ENCODE measurements at regions of chr15 and their contacts with region 1.

Region 1: GRCh38 chr15:41022487-41023090 is 69.3 kb downstream of the CHAC1 start:
- DNase-seq: peak; percentile 45 to 47
- H3K4me3 ChIP-seq: no peak overlapping the region
- H3K4me3 Mint-ChIP-seq: no peak overlapping the region
- H3K27ac Mint-ChIP-seq: no peak overlapping the region
- H3K4me1 ChIP-seq: 0 out of 2 replicates have a peak, but pooled peaks cover 5% of the 10 kb centered on the region
- H3K4me1 Mint-ChIP-seq: no peaks in the 10 kb centered on the region
- H3K27me3 ChIP-seq: no peaks in the 10 kb centered on the region
- H3K27me3 Mint-ChIP-seq: no peaks in the 10 kb centered on the region
- CTCF ChIP-seq: peak; percentile 68 to 78

Region 2: DNA sequence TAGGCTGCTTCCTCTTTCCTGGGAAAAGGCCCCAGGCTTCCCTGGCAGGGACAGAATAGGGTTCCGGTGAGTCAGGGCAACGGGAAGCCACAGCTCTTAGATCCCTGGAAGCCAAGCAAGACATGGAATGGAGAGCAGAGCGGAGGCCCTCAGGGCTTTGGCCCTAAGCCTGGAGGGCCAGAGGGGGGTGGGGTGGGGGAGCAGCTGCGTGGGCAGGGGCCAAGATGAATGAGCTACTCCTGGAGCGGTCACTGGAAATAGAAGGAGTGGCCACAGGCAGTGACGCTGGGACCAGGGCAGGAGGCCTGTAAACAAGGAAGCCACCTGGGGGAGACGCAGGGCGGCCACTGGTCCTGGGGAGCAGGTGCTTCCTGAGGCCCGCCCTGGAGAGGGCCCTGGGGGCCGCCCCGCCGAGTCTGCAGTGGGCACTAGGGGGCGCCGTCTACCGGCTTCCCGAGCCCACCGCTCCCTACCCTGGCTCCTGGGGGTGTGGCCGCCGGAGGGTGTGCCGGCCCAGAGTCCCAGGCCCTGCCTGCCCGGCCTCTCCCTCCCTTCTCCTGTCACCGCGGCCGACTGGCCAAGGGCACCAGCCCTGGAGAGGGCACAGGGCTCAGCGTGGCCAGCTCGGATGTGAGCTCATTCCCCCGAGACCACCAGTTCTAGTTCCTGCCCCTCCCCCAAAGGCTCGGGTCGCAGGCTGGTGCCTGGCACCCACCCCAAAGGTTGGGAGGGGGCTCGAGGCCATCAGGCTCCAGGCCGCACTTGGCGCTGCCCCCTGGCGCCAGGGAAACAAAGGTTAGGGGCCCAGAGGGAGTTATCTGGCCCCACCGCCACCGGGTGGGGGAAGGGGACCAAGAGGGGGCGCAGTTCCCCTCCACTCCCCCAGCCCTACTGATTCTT is 116.2 kb before region 1 on chr15:
- CTCF ChIA-PET with region 1: interaction called, 18 read pairs
- POLR2A ChIA-PET with region 1: no interaction called
- intact Hi-C with region 1: loop called (anchors 1 kb)
- DNase-seq: peak; percentile 88 to 92
- H3K4me3 ChIP-seq: peak overlapping the region; percentile 16; the same call in 1 of the 2 replicates
- H3K4me3 Mint-ChIP-seq: no peak overlapping the region
- H3K27ac Mint-ChIP-seq: peak overlapping the region; percentile 35
- H3K4me1 ChIP-seq: peaks cover 28% of the 10 kb centered on the region
- H3K4me1 Mint-ChIP-seq: peaks cover 12% of the 10 kb centered on the region
- H3K27me3 ChIP-seq: no peaks in the 10 kb centered on the region
- H3K27me3 Mint-ChIP-seq: no peaks in the 10 kb centered on the region
- CTCF ChIP-seq: peak; percentile 86 to 89

Region 3: GRCh38 chr15:40941528-40942336 is 80.9 kb before region 1 on chr15:
- CTCF ChIA-PET with region 1: interaction called, 10 read pairs
- POLR2A ChIA-PET with region 1: no interaction called
- intact Hi-C with region 1: loop called (anchors 1 kb)
- DNase-seq: peak; percentile 86 to 90
- H3K4me3 ChIP-seq: peak overlapping the region; percentile 56
- H3K4me3 Mint-ChIP-seq: peak overlapping the region; percentile 79
- H3K27ac Mint-ChIP-seq: peak overlapping the region; percentile 95
- H3K4me1 ChIP-seq: peaks cover 12% of the 10 kb centered on the region
- H3K4me1 Mint-ChIP-seq: no peaks in the 10 kb centered on the region
- H3K27me3 ChIP-seq: no peaks in the 10 kb centered on the region
- H3K27me3 Mint-ChIP-seq: no peaks in the 10 kb centered on the region
- CTCF ChIP-seq: peak; percentile 16 to 60

Region 4: GRCh38 chr15:40968290-40969085 is 54.1 kb before region 1 on chr15:
- CTCF ChIA-PET with region 1: no interaction called
- POLR2A ChIA-PET with region 1: interaction called, 10 read pairs
- intact Hi-C with region 1: no loop called
- DNase-seq: no peak
- H3K4me3 ChIP-seq: no peak overlapping the region
- H3K4me3 Mint-ChIP-seq: no peak overlapping the region
- H3K27ac Mint-ChIP-seq: no peak overlapping the region
- H3K4me1 ChIP-seq: 0 out of 2 replicates have a peak, but pooled peaks cover 3% of the 10 kb centered on the region
- H3K4me1 Mint-ChIP-seq: peaks cover 9% of the 10 kb centered on the region
- H3K27me3 ChIP-seq: no peaks in the 10 kb centered on the region
- H3K27me3 Mint-ChIP-seq: no peaks in the 10 kb centered on the region
- CTCF ChIP-seq: no peak

Region 5: GRCh38 chr15:41056810-41057209 is 34.2 kb after region 1 on chr15:
- CTCF ChIA-PET with region 1: no interaction called
- POLR2A ChIA-PET with region 1: no interaction called
- intact Hi-C with region 1: loop called (anchors 2 kb)
- DNase-seq: no peak
- H3K4me3 ChIP-seq: no peak overlapping the region
- H3K4me3 Mint-ChIP-seq: no peak overlapping the region
- H3K27ac Mint-ChIP-seq: no peak overlapping the region
- H3K4me1 ChIP-seq: no peaks in the 10 kb centered on the region
- H3K4me1 Mint-ChIP-seq: no peaks in the 10 kb centered on the region
- H3K27me3 ChIP-seq: no peaks in the 10 kb centered on the region
- H3K27me3 Mint-ChIP-seq: no peaks in the 10 kb centered on the region
- CTCF ChIP-seq: no peak

Region 6: DNA sequence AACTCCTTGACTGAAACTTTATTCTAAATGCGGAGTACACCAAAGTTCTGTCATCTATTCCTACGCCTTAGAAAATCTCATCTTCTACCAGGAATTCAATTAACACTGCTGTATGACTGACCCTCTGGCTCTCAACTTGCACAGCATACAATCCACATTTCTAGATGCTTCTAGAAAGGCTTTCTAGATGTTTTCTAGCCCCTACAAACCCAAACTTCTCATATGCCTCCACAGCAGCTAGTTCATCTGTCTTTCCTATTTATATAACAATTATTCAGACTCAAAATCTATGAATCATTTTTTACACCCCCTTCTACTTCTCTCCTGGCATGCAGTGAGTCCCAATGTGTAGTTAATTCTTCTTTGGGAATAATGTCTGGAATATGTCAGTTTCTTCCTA is 80.3 kb after region 1 on chr15:
- CTCF ChIA-PET with region 1: no interaction called
- POLR2A ChIA-PET with region 1: no interaction called
- intact Hi-C with region 1: loop called (anchors 1 kb)
- DNase-seq: no peak
- H3K4me3 ChIP-seq: no peak overlapping the region
- H3K4me3 Mint-ChIP-seq: no peak overlapping the region
- H3K27ac Mint-ChIP-seq: no peak overlapping the region
- H3K4me1 ChIP-seq: no peaks in the 10 kb centered on the region
- H3K4me1 Mint-ChIP-seq: peaks cover 6% of the 10 kb centered on the region
- H3K27me3 ChIP-seq: no peaks in the 10 kb centered on the region
- H3K27me3 Mint-ChIP-seq: no peaks in the 10 kb centered on the region
- CTCF ChIP-seq: no peak

Region 7: GRCh38 chr15:41180206-41180789 is 157.7 kb after region 1 on chr15:
- CTCF ChIA-PET with region 1: interaction called, 3 read pairs
- POLR2A ChIA-PET with region 1: no interaction called
- intact Hi-C with region 1: loop called (anchors 10 kb)
- DNase-seq: no peak
- H3K4me3 ChIP-seq: no peak overlapping the region
- H3K4me3 Mint-ChIP-seq: no peak overlapping the region
- H3K27ac Mint-ChIP-seq: no peak overlapping the region
- H3K4me1 ChIP-seq: no peaks in the 10 kb centered on the region
- H3K4me1 Mint-ChIP-seq: no peaks in the 10 kb centered on the region
- H3K27me3 ChIP-seq: no peaks in the 10 kb centered on the region
- H3K27me3 Mint-ChIP-seq: no peaks in the 10 kb centered on the region
- CTCF ChIP-seq: no peak

Region 8: GRCh38 chr15:41263891-41264351 is 241.3 kb after region 1 on chr15:
- CTCF ChIA-PET with region 1: no interaction called
- POLR2A ChIA-PET with region 1: no interaction called
- intact Hi-C with region 1: no loop called
- DNase-seq: peak; percentile 50 to 53
- H3K4me3 ChIP-seq: no peak overlapping the region
- H3K4me3 Mint-ChIP-seq: peak overlapping the region; percentile 29
- H3K27ac Mint-ChIP-seq: peak overlapping the region; percentile 80
- H3K4me1 ChIP-seq: peaks cover 28% of the 10 kb centered on the region
- H3K4me1 Mint-ChIP-seq: peaks cover 12% of the 10 kb centered on the region
- H3K27me3 ChIP-seq: no peaks in the 10 kb centered on the region
- H3K27me3 Mint-ChIP-seq: no peaks in the 10 kb centered on the region
- CTCF ChIP-seq: no peak